ENCODE measurements at regions of chr5 and their contacts with region 1.

Region 1: GRCh38 chr5:137320056-137321045 is 178.8 kb downstream of the SPOCK1 start:
- DNase-seq: peak in 1 of 2 experiments; percentile 71
- H3K4me3 ChIP-seq: no peak overlapping the region
- H3K27ac ChIP-seq: no peak overlapping the region
- H3K4me1 ChIP-seq: peaks cover 0 to 4% (median 0%) of the 10 kb centered on the region in 4 experiments; a peak in 2 of 7 replicates
- H3K27me3 ChIP-seq: no peaks in the 10 kb centered on the region
- CTCF ChIP-seq: peak in 2 of 3 experiments; percentile 69 to 77; a peak in 3 of 4 replicates
- EP300 ChIP-seq: no peak
- POLR2A ChIP-seq: no peak
- RAD21 ChIP-seq: peak; percentile 74 to 84

Region 2: GRCh38 chr5:137310051-137310730 is 10.2 kb before region 1 on chr5:
- CTCF ChIA-PET with region 1: interaction called, 10 read pairs
- POLR2A ChIA-PET with region 1: interaction called, 3 read pairs
- DNase-seq: no peak
- H3K4me3 ChIP-seq: no peak overlapping the region
- H3K27ac ChIP-seq: no peak overlapping the region
- H3K4me1 ChIP-seq: peaks cover 0 to 12% (median 4%) of the 10 kb centered on the region in 4 experiments
- H3K27me3 ChIP-seq: no peaks in the 10 kb centered on the region; a peak in 1 of 7 replicates
- CTCF ChIP-seq: no peak
- EP300 ChIP-seq: no peak
- POLR2A ChIP-seq: no peak
- RAD21 ChIP-seq: no peak

Region 3: GRCh38 chr5:137344723-137345322 is 24.5 kb after region 1 on chr5:
- CTCF ChIA-PET with region 1: interaction called, 80 read pairs
- POLR2A ChIA-PET with region 1: interaction called, 3 read pairs
- DNase-seq: peak; percentile 9 to 82
- H3K4me3 ChIP-seq: no peak overlapping the region
- H3K27ac ChIP-seq: no peak overlapping the region
- H3K4me1 ChIP-seq: peaks cover 0 to 5% (median 2%) of the 10 kb centered on the region in 4 experiments; a peak in 2 of 7 replicates
- H3K27me3 ChIP-seq: no peaks in the 10 kb centered on the region
- CTCF ChIP-seq: peak in 2 of 3 experiments; percentile 78 to 86; a peak in 3 of 4 replicates
- EP300 ChIP-seq: no peak
- POLR2A ChIP-seq: no peak
- RAD21 ChIP-seq: peak; percentile 77 to 83

Region 4: GRCh38 chr5:137375741-137376526 is 55.6 kb after region 1 on chr5:
- CTCF ChIA-PET with region 1: interaction called, 10 read pairs
- POLR2A ChIA-PET with region 1: no interaction called
- DNase-seq: no peak
- H3K4me3 ChIP-seq: no peak overlapping the region
- H3K27ac ChIP-seq: no peak overlapping the region
- H3K4me1 ChIP-seq: no peaks in the 10 kb centered on the region; a peak in 2 of 7 replicates
- H3K27me3 ChIP-seq: no peaks in the 10 kb centered on the region
- CTCF ChIP-seq: no peak
- EP300 ChIP-seq: no peak
- POLR2A ChIP-seq: no peak
- RAD21 ChIP-seq: no peak

Region 5: GRCh38 chr5:137478043-137478442 is 157.7 kb after region 1 on chr5:
- CTCF ChIA-PET with region 1: interaction called, 11 read pairs
- POLR2A ChIA-PET with region 1: no interaction called
- DNase-seq: no peak
- H3K4me3 ChIP-seq: no peak overlapping the region
- H3K27ac ChIP-seq: no peak overlapping the region
- H3K4me1 ChIP-seq: no peaks in the 10 kb centered on the region
- H3K27me3 ChIP-seq: no peaks in the 10 kb centered on the region
- CTCF ChIP-seq: no peak
- EP300 ChIP-seq: no peak
- POLR2A ChIP-seq: no peak
- RAD21 ChIP-seq: no peak

Region 6: DNA sequence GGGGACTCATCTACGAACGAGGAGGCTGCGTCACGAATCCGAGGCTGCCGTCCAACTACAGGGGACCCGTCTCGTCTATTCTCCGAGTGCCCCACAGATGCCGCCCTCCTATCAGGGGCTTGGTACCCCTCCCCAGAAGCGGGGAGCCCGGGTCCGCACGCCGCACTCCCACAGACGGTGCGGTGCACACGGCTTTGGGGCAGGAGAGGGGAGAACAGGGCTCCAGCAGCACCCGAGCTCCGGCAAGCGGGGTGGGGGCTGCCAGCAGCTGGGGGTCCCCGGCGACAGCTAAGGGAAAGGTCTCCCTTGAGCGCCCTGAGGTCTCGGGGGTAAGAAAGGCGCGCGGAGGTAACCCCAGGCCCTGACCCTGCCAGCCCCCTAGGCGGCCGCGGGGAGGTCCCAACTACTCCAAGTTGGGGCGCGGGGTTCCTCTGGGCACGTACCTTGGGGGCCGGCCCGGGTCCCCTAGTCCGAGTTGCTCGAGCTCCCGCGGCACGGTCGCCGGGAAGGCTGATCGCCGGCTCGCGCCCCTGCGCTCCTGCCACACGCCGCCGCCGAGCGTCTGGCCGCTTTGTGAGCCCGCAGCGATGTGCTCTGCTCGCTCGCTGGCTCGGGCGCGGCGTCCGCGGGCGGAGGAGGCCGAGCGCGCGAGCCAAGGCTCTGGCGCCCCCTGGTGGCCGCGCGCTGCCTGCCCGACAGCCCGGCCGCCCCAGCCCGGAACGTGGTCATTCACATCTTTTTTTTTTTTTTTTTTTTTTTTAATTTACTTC is 178.6 kb after region 1 on chr5 and contains the start of gene SPOCK1:
- CTCF ChIA-PET with region 1: interaction called, 47 read pairs
- POLR2A ChIA-PET with region 1: interaction called, 5 read pairs
- DNase-seq: peak; percentile 27 to 87
- H3K4me3 ChIP-seq: peak within 1 kb of the TSS; percentile 50 to 93 (median 74)
- H3K27ac ChIP-seq: no peak within 1 kb of the TSS
- H3K4me1 ChIP-seq: no peaks in the 10 kb centered on the region; a peak in 1 of 7 replicates
- H3K27me3 ChIP-seq: peaks cover 11 to 25% (median 18%) of the 10 kb centered on the region in 4 experiments
- CTCF ChIP-seq: peak; percentile 70 to 85 (median 75)
- EP300 ChIP-seq: no peak
- POLR2A ChIP-seq: 0 out of 3 replicates have a peak, but pooled peaks of 1 of the 2 experiments have one; percentile 32
- RAD21 ChIP-seq: peak; percentile 67 to 82
- total RNA-seq, gene SPOCK1: 14.0 and 18.1 TPM in 2 replicates